Activated CD8-positive, alpha-beta T cell treated with anti-CD3 and anti-CD28 coated beads, Interleukin-2, amount 10 ng/mL, durations not matched to agents 7 days and 5 days (primary cell): ENCODE measurements at regions of chr17 and their contacts with region 1.

Region 1: GRCh38 chr17:44522883-44523671 is 19.9 kb upstream of the GPATCH8 start:
- DNase-seq: peak; percentile 71
- ATAC-seq: peak; percentile 74
- H3K4me3 Mint-ChIP-seq: no peak overlapping the region
- H3K27ac Mint-ChIP-seq: no peak overlapping the region
- H3K4me1 Mint-ChIP-seq: no peaks in the 10 kb centered on the region
- H3K27me3 Mint-ChIP-seq: peaks cover 10% of the 10 kb centered on the region

Region 2: DNA sequence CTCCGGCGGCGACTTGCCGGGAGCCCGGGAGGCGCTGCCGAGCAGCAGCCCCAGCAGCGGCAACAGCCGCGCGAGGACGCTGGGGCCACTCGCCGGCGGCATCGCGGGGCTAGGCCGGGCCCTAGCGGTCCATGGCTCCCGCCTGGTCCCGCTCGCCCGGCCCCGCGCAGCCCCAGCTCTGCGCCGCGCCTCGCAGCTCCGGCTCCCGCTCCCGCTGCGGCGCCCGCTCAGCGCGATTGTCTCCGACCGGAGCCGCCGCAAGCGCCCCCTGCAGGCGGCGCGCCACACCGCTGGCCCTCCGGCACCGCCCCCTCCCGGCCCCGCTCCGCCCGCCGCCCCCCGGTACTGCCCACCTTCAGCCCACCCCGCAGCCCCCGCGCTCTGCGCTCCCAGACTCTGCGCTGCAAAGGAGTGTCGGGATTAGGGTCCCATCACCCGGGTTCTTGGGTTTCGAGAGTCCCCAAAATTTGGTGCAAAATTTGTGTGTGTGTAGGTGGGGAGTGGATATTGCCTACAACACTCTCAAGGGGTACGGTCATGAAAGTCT is 159.4 kb before region 1 on chr17 and contains the start of gene FAM171A2:
- CTCF ChIA-PET with region 1: interaction called, 15 read pairs
- POLR2A ChIA-PET with region 1: no interaction called
- DNase-seq: peak; percentile 70
- ATAC-seq: peak; percentile 93
- H3K4me3 Mint-ChIP-seq: peak within 1 kb of the TSS; percentile 73
- H3K27ac Mint-ChIP-seq: no peak within 1 kb of the TSS
- H3K4me1 Mint-ChIP-seq: peaks cover 4% of the 10 kb centered on the region
- H3K27me3 Mint-ChIP-seq: peaks cover 40% of the 10 kb centered on the region
- total RNA-seq, gene FAM171A2: 0.37 to 0.45 TPM

Region 3: DNA sequence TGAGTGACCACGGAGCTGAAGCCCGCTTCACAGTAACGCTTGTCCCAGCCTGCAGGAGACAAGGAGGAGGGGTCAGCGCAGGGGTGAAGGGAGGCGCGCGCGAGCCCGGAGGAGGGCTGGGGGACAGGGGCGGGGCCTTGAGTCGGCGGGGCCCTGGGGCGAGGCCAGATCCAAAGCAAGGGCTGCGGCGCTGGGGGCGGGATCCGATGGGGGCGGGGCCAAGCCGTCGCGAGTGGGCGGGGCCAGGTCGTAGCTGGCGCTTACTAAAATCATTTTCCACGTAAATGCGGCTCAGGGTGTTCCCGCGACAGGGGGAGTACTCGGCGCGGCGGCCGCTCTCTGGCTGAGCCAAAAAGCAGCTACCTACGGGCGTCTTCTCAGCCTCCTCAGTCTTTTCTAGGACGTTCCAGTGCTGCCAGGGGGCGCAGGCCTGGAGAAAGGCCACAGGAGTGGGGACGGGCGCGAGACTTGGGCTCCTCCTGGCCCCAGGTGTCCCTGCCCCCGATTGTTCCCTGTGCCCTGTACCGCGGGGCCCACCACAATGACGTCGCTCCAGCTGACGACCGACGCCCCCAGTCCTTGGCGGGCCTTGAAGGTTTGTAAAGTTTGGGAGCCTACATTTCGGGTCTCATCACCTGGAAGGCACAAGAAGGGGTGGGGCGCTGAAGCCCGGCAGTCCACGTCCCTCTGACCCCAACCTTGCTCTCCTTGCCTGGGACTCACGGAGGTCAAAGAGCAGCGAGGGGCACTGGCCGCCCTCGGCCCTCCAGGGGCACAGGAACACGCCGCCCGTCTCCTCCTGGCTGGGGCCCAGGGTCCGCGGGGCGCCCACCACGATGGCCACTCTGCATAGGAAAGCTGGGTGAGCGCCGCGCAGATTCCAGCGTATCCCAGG is 137.5 kb before region 1 on chr17:
- CTCF ChIA-PET with region 1: interaction called, 13 read pairs
- POLR2A ChIA-PET with region 1: no interaction called
- DNase-seq: peak; percentile 87
- ATAC-seq: peak; percentile 92
- H3K4me3 Mint-ChIP-seq: peak overlapping the region; percentile 71
- H3K27ac Mint-ChIP-seq: no peak overlapping the region
- H3K4me1 Mint-ChIP-seq: peaks cover 22% of the 10 kb centered on the region
- H3K27me3 Mint-ChIP-seq: peaks cover 29% of the 10 kb centered on the region

Region 4: GRCh38 chr17:44400226-44400847 is 122.7 kb before region 1 on chr17:
- CTCF ChIA-PET with region 1: interaction called, 10 read pairs
- POLR2A ChIA-PET with region 1: no interaction called
- DNase-seq: no peak
- ATAC-seq: no peak
- H3K4me3 Mint-ChIP-seq: no peak overlapping the region
- H3K27ac Mint-ChIP-seq: no peak overlapping the region
- H3K4me1 Mint-ChIP-seq: peaks cover 14% of the 10 kb centered on the region
- H3K27me3 Mint-ChIP-seq: no peaks in the 10 kb centered on the region

Region 5: DNA sequence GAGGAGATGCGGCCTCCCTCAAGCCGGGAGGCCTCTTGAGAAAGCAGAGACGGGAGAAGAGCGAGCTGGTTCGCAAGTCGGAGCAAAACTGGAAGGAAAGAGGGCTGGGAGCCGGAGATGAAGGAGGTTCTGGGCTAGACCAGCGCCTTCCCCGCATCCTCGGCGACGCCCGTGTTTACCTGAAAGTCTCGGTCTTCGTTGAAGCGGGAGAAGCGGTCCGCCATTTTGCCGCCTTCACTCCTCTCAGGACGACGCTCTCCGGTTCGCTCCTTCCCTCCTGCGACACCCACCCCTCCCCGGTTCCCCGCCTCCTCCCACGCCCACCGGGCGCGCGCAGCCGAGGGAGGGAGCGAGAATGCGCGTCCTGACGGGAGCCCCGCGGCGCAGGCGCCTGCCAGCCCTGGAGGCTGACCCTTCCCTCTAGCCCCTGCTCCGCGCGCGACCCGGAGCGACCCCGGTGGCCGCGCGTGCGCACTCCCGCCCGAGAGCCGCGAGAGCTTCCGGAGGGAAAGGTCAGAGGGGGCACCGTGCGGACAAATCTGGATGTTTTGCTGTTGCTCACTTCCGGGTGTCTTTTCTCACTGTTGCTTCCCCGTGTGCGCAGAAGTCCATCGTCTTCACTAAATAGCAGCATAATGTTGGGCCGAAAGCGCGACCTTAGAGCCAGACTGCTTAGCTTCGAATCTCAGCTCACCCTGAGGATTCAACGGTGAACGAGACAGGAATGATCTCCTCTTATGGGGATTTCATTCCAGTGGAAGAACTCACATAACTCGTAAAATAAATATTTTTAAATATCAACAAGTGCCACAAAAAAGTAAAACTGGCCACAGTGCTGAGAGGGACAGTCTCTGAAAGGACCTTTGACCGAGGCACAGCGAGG is 19.7 kb before region 1 on chr17 and contains the start of gene GPATCH8:
- CTCF ChIA-PET with region 1: interaction called, 12 read pairs
- POLR2A ChIA-PET with region 1: interaction called, 3 read pairs
- DNase-seq: peak; percentile 95
- ATAC-seq: peak; percentile 97
- H3K4me3 Mint-ChIP-seq: peak within 1 kb of the TSS; percentile 99
- H3K27ac Mint-ChIP-seq: peak within 1 kb of the TSS; percentile 98
- H3K4me1 Mint-ChIP-seq: peaks cover 28% of the 10 kb centered on the region
- H3K27me3 Mint-ChIP-seq: peaks cover 2% of the 10 kb centered on the region
- total RNA-seq, gene GPATCH8: 45.7 to 45.8 TPM

Region 6: GRCh38 chr17:44533533-44534246 is 10.6 kb after region 1 on chr17:
- CTCF ChIA-PET with region 1: interaction called, 38 read pairs
- POLR2A ChIA-PET with region 1: interaction called, 3 read pairs
- DNase-seq: peak; percentile 90
- ATAC-seq: peak; percentile 97
- H3K4me3 Mint-ChIP-seq: no peak overlapping the region
- H3K27ac Mint-ChIP-seq: no peak overlapping the region
- H3K4me1 Mint-ChIP-seq: peaks cover 7% of the 10 kb centered on the region
- H3K27me3 Mint-ChIP-seq: peaks cover 2% of the 10 kb centered on the region